Heart right ventricle (tissue), 16 donors: ENCODE measurements at regions of chr7 and their contacts with region 1.

Region 1: GRCh38 chr7:98240961-98241674 is 10.9 kb downstream of the TECPR1 start:
- DNase-seq: peak in 1 of 2 donors; percentile 31
- ATAC-seq: peak; percentile 15 to 61 (median 40)
- H3K4me3 ChIP-seq: no peak overlapping the region
- H3K27ac ChIP-seq: no peak overlapping the region
- H3K4me1 ChIP-seq: peaks cover 0 to 19% (median 14%) of the 10 kb centered on the region in 9 donors
- H3K27me3 ChIP-seq: no peaks in the 10 kb centered on the region
- CTCF ChIP-seq: peak; percentile 52 to 77 (median 76)

Region 2: DNA sequence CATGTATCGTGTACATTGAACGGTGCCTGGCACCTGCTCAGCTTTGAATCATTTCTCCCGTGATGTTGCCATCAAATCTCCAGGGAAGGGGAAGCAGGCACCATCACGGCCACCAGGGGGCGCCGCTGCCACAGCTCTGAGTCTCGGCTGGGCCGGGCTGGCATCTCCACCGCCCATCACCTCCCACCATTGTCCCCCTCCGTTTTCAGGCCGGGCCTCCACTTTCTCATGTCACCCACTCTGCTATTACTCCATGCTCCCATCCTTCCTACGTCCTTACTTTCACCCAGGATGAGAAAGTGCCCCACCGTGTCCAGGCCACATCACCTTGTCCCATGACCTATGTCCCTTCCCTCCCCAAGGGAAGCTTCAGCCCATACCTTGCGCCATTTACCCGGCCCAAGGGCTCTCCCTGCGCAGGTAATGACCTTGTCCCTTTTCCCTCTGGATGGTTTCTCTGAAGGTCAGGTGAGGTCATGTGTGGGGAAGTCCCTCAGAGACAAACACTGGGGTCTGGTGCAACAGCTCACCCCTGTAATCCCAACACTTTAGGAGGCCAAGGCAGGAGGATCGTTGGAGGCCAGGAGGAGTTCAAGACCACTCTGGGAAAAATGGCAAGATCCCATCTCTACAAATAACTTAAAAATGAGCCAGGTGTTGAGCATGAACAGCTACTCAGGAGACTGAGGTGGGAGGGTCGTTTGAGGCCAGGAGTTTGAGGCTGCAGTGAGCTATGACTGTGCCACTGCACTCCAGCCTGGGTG is 219.3 kb before region 1 on chr7:
- intact Hi-C with region 1: loop called in 8 of 10 experiments (anchors 2 to 10 kb)
- DNase-seq: peak; percentile 64 to 80
- ATAC-seq: peak; percentile 59 to 90 (median 81)
- H3K4me3 ChIP-seq: no peak overlapping the region
- H3K27ac ChIP-seq: no peak overlapping the region
- H3K4me1 ChIP-seq: peaks cover 0 to 4% (median 0%) of the 10 kb centered on the region in 9 donors
- H3K27me3 ChIP-seq: peaks cover 0 to 27% (median 5%) of the 10 kb centered on the region in 7 donors
- CTCF ChIP-seq: peak; percentile 82 to 97 (median 92)

Region 3: DNA sequence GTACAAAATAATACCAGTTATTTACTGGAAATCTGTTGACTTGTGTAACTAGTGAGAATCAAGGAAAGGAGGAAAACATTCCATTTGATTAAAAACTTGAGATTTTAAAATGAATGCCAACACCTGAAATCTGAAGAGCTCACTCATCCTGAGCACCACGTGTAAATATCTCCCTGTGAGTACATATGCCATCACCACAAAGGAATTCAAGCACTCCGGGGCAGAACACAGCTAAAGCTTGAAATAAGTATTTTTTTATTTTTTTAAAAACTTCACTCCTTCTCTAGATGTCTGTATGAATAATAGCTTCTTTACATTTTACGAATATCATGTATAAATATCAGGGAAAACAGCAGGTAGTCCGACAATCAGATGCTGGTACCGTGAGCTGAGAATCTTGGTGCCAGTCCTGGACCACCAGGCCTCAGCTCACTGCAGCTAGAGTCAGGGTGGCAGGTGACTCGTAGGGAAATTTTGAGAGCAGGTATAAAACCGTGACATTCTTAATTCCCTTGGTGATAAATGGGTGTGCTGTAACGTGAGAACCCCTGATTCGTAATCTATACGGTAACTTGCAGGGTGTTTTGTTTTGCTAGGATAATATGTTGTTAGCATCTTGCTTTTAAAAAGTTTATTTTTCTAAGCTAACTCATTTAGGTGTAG is 121.7 kb before region 1 on chr7:
- intact Hi-C with region 1: loop called in 1 of 10 experiments (anchors 10 kb)
- DNase-seq: no peak
- ATAC-seq: peak in 4 of 8 donors; percentile 52 to 56 (median 54)
- H3K4me3 ChIP-seq: no peak overlapping the region
- H3K27ac ChIP-seq: peak overlapping the region in 5 of 10 donors; percentile 9 to 72 (median 64)
- H3K4me1 ChIP-seq: peaks cover 0 to 57% (median 27%) of the 10 kb centered on the region in 9 donors
- H3K27me3 ChIP-seq: peaks cover 0 to 14% (median 0%) of the 10 kb centered on the region in 7 donors
- CTCF ChIP-seq: no peak